ENCODE measurements at regions of chr4 and their contacts with region 1.

Region 1: GRCh38 chr4:147866532-147867271 is 134.8 kb downstream of the ARHGAP10 start:
- DNase-seq: peak; percentile 91 to 97 (median 92)
- H3K4me3 ChIP-seq: no peak overlapping the region
- H3K27ac ChIP-seq: no peak overlapping the region
- H3K4me1 ChIP-seq: no peaks in the 10 kb centered on the region
- H3K27me3 ChIP-seq: no peaks in the 10 kb centered on the region

Region 2: DNA sequence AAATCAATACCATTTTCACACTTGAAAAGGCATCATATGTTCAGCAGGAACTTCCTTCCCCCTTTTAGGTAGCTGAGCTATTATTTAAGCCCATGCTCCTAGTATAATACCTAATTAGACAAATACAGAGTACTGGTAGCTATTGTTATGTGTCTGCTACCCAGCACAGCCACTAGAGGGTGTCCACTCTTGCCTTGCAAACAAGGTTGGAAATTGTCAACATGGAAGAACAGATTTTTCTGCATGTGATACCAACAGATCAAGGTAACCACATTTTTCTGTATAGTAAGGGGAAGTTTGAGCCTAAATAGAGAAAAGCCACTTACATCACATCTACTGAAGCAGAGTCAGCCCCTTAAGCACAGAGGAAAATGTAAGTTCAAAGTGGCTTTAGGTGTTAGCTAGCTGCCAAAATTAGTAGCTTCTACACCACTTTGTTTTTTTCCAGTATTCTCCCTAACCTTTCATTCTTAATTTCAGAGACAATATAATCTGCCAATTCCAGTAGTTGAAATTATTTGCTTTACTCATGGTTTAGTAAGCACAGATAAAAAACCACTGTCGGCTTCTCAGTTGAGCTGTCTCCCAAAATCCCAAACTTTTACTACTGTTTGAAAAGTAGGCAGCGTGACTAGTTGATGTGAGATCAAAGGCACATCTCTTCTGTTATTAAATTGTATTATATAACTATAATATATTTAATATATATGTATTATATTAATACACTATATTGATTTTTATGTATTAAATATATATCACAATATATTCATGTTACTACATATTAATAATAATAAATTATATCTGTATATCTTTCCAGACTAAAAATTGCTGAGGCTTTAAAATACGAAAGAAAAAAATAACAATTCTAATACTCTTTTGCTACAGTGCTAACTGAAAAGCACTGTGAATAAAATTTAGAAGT is 347.6 kb before region 1 on chr4:
- CTCF ChIA-PET with region 1: interaction called, 22 read pairs
- POLR2A ChIA-PET with region 1: no interaction called
- DNase-seq: peak; percentile 67 to 86 (median 81)
- H3K4me3 ChIP-seq: no peak overlapping the region
- H3K27ac ChIP-seq: no peak overlapping the region
- H3K4me1 ChIP-seq: no peaks in the 10 kb centered on the region
- H3K27me3 ChIP-seq: peaks cover 0 to 2% (median 0%) of the 10 kb centered on the region in 5 experiments

Region 3: DNA sequence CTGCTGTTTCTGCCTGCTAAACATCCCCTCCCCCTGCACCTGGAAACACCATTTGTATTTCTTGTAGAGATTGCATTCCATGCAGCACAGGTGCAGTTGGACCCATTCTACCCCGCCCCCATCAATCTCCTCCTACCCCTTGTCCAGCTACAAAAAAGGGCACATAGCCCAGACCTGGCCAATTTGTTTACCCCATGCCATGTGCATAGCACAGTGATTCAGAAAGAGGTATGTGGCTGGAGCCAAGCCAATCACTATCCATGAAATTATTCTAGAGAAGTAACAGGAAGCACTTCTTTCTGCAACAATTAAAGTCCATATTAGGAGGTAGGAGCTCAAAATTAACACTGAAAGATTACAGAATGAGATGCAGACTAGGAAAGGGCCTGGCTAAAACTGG is 269.7 kb before region 1 on chr4:
- CTCF ChIA-PET with region 1: interaction called, 12 read pairs
- POLR2A ChIA-PET with region 1: no interaction called
- DNase-seq: no peak
- H3K4me3 ChIP-seq: no peak overlapping the region
- H3K27ac ChIP-seq: no peak overlapping the region
- H3K4me1 ChIP-seq: no peaks in the 10 kb centered on the region
- H3K27me3 ChIP-seq: peaks cover 0 to 1% (median 0%) of the 10 kb centered on the region in 5 experiments

Region 4: GRCh38 chr4:147683717-147684700 is 182.7 kb before region 1 on chr4 and contains the start of gene PRMT9:
- CTCF ChIA-PET with region 1: interaction called, 26 read pairs
- POLR2A ChIA-PET with region 1: no interaction called
- DNase-seq: peak; percentile 89 to 90 (median 89)
- H3K4me3 ChIP-seq: peak within 1 kb of the TSS; percentile 80 to 98 (median 91)
- H3K27ac ChIP-seq: peak within 1 kb of the TSS; percentile 84 to 92
- H3K4me1 ChIP-seq: peaks cover 4 to 21% (median 11%) of the 10 kb centered on the region in 4 experiments
- H3K27me3 ChIP-seq: no peaks in the 10 kb centered on the region

Region 5: GRCh38 chr4:147714575-147715401 is 151.9 kb before region 1 on chr4:
- CTCF ChIA-PET with region 1: interaction called, 101 read pairs
- POLR2A ChIA-PET with region 1: no interaction called
- DNase-seq: no peak
- H3K4me3 ChIP-seq: no peak overlapping the region
- H3K27ac ChIP-seq: no peak overlapping the region
- H3K4me1 ChIP-seq: no peaks in the 10 kb centered on the region
- H3K27me3 ChIP-seq: no peaks in the 10 kb centered on the region

Region 6: DNA sequence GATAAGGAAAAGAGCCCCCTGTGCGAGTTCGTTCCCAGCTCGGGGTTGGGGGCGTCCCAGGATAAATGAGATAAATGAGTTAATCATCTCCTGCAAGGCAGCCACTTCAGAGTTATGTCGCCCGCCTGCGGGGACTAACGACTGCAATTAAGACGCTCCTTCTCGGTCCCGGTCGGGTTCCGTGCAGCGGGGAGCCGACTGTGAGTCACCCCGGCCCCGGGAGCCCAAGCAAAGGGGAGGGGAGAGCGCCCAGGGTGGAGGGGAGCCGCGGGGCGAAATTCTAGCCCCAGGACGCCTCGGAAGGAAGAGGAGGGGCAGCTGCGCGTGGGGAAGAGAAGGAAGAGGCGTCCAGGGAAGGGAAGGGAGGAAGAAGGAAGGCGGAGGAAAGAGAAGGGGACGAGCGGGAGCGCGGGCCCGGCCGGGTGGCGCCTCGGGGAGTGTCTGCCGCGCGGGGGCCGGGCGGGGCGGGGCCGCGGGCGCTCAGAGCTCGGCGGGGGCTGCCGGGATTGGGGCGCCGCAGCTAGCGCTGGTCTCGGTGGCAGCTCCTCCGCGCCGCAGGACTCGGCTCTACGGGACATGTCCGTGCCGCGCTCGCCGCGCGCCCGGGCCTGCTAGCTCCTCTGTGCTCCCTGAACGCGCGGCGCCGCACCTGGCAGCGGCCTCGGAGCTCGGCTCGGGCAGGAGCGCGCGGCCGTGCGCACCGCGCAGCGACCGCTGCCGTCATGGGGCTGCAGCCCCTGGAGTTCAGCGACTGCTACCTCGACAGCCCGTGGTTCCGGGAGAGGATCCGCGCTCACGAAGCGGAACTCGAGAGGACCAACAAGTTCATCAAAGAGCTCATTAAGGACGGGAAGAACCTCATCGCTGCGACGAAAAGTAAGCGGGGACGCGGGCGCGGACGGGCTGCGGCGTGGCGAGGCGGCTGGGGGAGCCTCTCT is 134.9 kb before region 1 on chr4 and contains the start of gene ARHGAP10:
- CTCF ChIA-PET with region 1: interaction called, 45 read pairs
- POLR2A ChIA-PET with region 1: no interaction called
- DNase-seq: peak; percentile 69 to 89 (median 84)
- H3K4me3 ChIP-seq: peak within 1 kb of the TSS; percentile 80 to 92 (median 87)
- H3K27ac ChIP-seq: no peak within 1 kb of the TSS
- H3K4me1 ChIP-seq: peaks cover 9 to 28% (median 19%) of the 10 kb centered on the region in 4 experiments
- H3K27me3 ChIP-seq: peaks cover 0 to 20% (median 5%) of the 10 kb centered on the region in 5 experiments

Region 7: DNA sequence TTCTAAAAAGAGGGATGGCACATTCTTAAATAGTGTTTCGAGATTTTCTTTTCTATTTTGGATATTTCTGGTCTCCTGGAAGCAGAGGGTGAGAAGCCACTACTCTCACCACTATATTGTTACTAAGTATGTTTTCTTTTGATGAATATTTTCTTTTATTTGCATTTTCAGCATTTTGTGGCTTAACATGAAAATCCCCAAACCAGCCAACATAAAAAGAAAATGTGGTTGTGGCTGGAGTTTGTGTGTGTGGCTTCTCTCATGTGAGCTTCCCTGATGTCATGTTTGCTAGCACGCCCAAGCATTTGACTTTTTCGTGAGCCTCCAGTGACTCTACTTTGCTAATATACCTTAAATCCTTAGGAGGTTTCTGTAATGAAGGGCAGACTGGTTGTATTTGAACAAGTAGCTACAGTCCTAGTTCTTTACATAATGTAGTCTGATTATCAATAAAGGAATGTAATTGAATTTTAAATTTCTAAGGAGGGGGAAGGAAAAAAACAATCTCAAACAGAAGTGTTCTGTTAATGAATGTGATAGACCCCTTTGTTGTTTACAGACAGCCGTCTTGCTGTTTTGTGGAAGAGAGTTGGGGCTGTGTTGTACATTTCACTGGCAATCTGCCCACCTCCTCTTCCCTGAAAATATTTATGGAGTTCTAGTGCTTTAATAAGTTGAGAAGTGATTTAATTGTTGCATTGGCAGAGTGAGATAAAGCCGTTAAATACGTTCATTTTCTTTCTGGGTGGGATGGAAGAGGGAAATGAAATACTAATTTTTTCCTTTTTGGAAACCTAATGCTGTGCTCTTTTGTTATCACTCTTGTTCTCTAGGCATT is 20.2 kb before region 1 on chr4:
- CTCF ChIA-PET with region 1: interaction called, 24 read pairs
- POLR2A ChIA-PET with region 1: no interaction called
- DNase-seq: no peak
- H3K4me3 ChIP-seq: no peak overlapping the region
- H3K27ac ChIP-seq: no peak overlapping the region
- H3K4me1 ChIP-seq: peaks cover 0 to 4% (median 0%) of the 10 kb centered on the region in 4 experiments
- H3K27me3 ChIP-seq: no peaks in the 10 kb centered on the region

Region 8: GRCh38 chr4:147916351-147916750 is 49.6 kb after region 1 on chr4:
- CTCF ChIA-PET with region 1: no interaction called
- POLR2A ChIA-PET with region 1: no interaction called
- DNase-seq: no peak
- H3K4me3 ChIP-seq: no peak overlapping the region
- H3K27ac ChIP-seq: no peak overlapping the region
- H3K4me1 ChIP-seq: no peaks in the 10 kb centered on the region
- H3K27me3 ChIP-seq: no peaks in the 10 kb centered on the region

Region 9: DNA sequence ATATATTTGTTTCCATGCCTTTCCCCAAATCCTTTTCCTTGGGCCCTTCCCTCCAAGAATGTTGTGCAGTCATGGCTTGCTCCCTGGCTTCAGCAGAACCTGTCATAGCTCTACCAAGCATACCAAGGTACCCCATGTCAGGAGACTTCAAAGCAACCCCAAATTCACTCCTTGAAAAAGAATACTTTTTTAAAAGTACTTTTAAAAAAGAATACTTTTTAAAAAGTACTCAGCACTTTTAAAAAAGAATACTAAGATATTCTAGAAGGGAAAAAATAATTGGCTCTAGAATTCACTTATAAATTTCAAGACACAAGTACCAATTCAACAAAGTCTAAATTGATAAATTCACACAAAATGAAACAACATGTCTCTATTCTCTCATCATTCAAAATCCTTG is 499.5 kb after region 1 on chr4:
- CTCF ChIA-PET with region 1: no interaction called
- POLR2A ChIA-PET with region 1: no interaction called
- DNase-seq: peak in 1 of 3 donors; percentile 7
- H3K4me3 ChIP-seq: no peak overlapping the region
- H3K27ac ChIP-seq: no peak overlapping the region
- H3K4me1 ChIP-seq: no peaks in the 10 kb centered on the region
- H3K27me3 ChIP-seq: no peaks in the 10 kb centered on the region

Measured in common myeloid progenitor, CD34-positive (primary cell).